Colonic mucosa (tissue), 4 donors: ENCODE measurements at regions of chr3 and their contacts with region 1.

Region 1: GRCh38 chr3:182241766-182242488 is 530.2 kb downstream of the SOX2 start:
- DNase-seq: no peak
- H3K4me3 ChIP-seq: no peak overlapping the region
- H3K27ac ChIP-seq: no peak overlapping the region
- H3K4me1 ChIP-seq: no peaks in the 10 kb centered on the region
- H3K27me3 ChIP-seq: no peaks in the 10 kb centered on the region
- CTCF ChIP-seq: no peak

Region 2: DNA sequence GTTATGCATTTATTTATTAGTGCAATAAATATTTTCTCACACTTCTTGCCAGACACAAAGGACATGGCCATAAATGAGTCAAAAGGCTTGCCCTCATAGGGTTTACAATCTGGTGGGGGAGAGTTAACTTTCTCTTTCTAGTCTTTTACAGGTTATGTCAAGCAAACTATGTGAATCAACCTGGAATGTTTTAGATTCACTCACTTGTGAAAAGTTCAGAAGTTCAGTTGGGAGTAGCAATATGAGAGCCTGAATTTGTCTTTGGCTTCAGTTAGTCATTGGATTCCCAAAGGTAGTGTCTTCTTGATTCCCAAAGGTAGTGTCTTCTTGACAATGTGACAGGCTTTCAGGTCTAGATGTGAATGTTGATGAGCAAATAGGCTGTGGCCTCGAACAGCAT is 265.4 kb before region 1 on chr3:
- intact Hi-C with region 1: no loop called
- DNase-seq: no peak
- H3K4me3 ChIP-seq: no peak overlapping the region
- H3K27ac ChIP-seq: no peak overlapping the region
- H3K4me1 ChIP-seq: no peaks in the 10 kb centered on the region
- H3K27me3 ChIP-seq: no peaks in the 10 kb centered on the region
- CTCF ChIP-seq: no peak

Region 3: DNA sequence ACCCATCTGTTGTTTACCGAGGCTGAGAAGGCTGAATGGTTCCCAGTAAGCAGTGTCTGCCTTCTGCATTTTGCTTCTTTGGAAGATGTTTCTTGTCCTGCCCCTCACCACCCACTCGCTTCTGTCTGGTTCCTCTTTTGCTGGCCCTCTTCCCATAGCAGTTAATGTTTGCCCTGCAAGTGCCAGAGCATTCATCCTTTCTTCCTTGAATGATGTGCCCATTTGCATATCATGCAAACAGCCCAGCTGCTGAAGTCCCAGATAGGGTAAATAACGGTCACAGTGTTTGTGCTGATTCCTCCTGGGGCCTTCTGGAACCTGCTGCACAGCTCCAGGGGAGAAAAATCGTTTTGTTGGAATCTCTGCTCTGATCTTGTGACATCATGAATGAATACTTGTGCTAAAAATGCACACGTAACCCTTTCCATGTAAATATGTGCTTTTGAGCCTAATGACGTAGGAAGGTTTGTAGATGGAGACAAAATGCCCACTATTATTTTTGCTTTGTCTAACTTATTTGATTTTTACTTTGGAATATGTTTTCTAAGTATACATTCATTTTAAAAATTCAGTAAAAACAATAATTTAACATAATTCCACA is 149.2 kb before region 1 on chr3:
- intact Hi-C with region 1: no loop called
- DNase-seq: no peak
- H3K4me3 ChIP-seq: no peak overlapping the region
- H3K27ac ChIP-seq: no peak overlapping the region
- H3K4me1 ChIP-seq: no peaks in the 10 kb centered on the region
- H3K27me3 ChIP-seq: no peaks in the 10 kb centered on the region
- CTCF ChIP-seq: no peak

Region 4: GRCh38 chr3:182683453-182683852 is 441.5 kb after region 1 on chr3:
- intact Hi-C with region 1: loop called (anchors 10 kb)
- DNase-seq: peak; percentile 82
- H3K4me3 ChIP-seq: peak overlapping the region; percentile 46
- H3K27ac ChIP-seq: peak overlapping the region; percentile 68
- H3K4me1 ChIP-seq: no peaks in the 10 kb centered on the region
- H3K27me3 ChIP-seq: no peaks in the 10 kb centered on the region
- CTCF ChIP-seq: peak; percentile 89